ENCODE measurements at regions of chr19 and their contacts with region 1.

Region 1: DNA sequence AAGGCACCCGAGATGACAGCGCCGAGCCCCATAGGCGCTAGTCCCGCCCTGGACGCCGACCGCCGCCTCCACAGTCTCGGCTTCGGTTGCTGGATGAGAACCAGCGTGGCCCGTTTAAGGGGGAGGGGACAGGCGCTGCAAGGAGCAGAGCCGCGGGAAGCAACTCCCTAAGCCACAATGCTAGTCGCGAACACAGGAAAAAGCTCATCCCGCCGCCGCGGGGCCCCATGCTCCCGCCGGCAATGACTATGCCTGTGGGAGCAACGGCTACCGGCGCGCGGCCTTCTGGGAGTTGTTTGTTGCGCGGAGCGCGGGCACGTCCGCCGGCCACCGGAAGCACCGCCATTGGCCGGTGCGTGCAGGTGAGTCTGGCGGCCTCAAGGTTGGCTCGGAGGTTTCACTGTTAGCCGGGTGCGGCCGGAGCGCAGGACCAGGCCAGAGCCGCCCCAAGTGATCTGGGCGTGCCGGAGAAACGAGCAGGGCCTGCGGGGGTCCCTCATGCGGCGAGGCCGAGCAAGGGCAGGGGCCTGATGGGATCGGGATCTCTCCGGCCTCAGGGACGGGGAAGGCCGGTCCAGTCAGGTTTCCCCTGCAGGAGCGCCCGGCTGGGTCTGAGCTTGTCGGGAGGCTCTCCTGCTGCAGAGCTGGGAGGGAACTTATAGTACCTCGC is at the start of gene ZNF544:
- DNase-seq: peak; percentile 86 to 88
- H3K4me3 ChIP-seq: peak within 1 kb of the TSS; percentile 66
- H3K4me3 Mint-ChIP-seq: peak within 1 kb of the TSS; percentile 96
- H3K27ac Mint-ChIP-seq: peak within 1 kb of the TSS; percentile 99
- H3K4me1 ChIP-seq: peaks cover 5% of the 10 kb centered on the region; the same call in 1 of the 2 replicates
- H3K4me1 Mint-ChIP-seq: peaks cover 7% of the 10 kb centered on the region
- H3K27me3 ChIP-seq: no peaks in the 10 kb centered on the region
- H3K27me3 Mint-ChIP-seq: no peaks in the 10 kb centered on the region
- CTCF ChIP-seq: peak; percentile 15 to 18
- total RNA-seq, gene ZNF544: 48.7 and 53.8 TPM in 2 replicates

Region 2: GRCh38 chr19:58182989-58183816 is 45.5 kb before region 1 on chr19 and contains the start of gene ZNF274:
- CTCF ChIA-PET with region 1: no interaction called
- POLR2A ChIA-PET with region 1: interaction called, 3 read pairs
- intact Hi-C with region 1: loop called (anchors 2 kb)
- DNase-seq: peak; percentile 96 to 97
- H3K4me3 ChIP-seq: peak within 1 kb of the TSS; percentile 72
- H3K4me3 Mint-ChIP-seq: peak within 1 kb of the TSS; percentile 86
- H3K27ac Mint-ChIP-seq: peak within 1 kb of the TSS; percentile 95
- H3K4me1 ChIP-seq: 0 out of 2 replicates have a peak, but pooled peaks cover 3% of the 10 kb centered on the region
- H3K4me1 Mint-ChIP-seq: no peaks in the 10 kb centered on the region
- H3K27me3 ChIP-seq: no peaks in the 10 kb centered on the region
- H3K27me3 Mint-ChIP-seq: no peaks in the 10 kb centered on the region
- CTCF ChIP-seq: no peak
- total RNA-seq, gene ZNF274: 19.9 and 21.6 TPM in 2 replicates

Region 3: DNA sequence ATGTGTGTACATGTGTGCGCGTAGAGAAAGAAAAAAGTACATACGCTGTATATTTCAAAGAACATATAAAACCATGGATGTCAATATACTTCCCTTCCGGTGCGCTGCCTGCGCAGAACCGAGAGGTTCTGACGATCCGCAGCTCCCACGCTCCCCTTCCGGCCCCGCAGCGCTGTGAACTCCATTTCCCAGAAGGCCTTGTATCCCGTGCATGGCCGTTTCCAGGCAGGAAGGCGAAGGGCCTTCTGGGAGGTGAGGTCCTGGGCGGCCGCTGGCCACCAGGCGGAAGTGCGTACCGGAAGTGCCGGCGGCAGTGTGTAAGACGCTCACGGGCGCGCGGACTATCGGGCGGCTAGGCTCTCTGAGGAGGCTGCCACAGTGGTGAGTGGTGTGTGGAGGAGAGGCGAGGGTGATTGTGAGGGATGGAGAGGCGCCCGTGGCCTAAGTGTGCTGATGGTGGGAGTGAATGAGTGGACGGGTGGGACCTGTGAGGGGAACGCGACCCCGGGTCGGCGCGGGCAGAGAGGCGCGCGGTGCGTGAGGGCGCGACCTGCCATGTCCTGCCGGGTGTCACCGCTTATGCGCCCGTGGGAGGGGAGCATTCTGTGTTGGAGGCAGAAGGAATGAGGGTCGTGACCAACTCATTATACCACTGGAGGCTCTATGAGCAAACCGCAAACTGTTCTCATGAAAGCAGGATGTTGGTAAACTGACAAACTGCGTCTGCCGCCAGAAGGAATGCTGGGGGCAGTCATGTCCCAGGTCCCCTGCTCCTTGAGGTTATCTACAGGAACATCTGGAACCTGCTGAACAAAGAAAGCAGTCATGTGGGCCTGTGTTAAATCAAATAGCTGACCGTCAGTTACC is 76.6 kb after region 1 on chr19 and contains the start of gene ERVK3-1:
- CTCF ChIA-PET with region 1: no interaction called
- POLR2A ChIA-PET with region 1: no interaction called
- intact Hi-C with region 1: loop called (anchors 10 kb)
- DNase-seq: peak; percentile 94 to 95
- H3K4me3 ChIP-seq: peak within 1 kb of the TSS; percentile 68
- H3K4me3 Mint-ChIP-seq: peak within 1 kb of the TSS; percentile 93
- H3K27ac Mint-ChIP-seq: peak within 1 kb of the TSS; percentile 97
- H3K4me1 ChIP-seq: peaks cover 11% of the 10 kb centered on the region
- H3K4me1 Mint-ChIP-seq: peaks cover 8% of the 10 kb centered on the region
- H3K27me3 ChIP-seq: no peaks in the 10 kb centered on the region
- H3K27me3 Mint-ChIP-seq: no peaks in the 10 kb centered on the region
- CTCF ChIP-seq: no peak
- total RNA-seq, gene ERVK3-1: 61.3 and 66.1 TPM in 2 replicates